ENCODE measurements at regions of chr16 and their contacts with region 1.

Region 1: DNA sequence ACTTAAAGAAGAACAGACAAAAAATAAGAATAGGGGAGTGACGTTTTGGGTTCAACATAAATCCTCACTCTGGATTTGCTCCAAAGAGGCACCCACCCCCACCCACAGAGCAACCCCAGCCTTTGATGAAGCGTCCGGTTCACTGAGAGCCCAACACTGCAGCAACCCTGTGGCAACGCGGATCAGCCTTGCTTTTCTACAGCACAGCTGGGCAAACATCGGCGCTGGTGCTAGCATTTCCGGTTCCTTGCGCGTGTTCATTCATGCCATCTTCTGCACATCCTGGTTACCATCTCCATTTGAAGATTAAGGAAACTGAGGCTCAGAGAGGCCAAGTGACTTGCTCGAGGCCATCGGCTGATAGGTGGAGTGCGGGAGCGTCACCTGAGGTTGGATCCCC is 8.7 kb upstream of the GINS2 start:
- DNase-seq: no peak
- H3K4me3 ChIP-seq: no peak overlapping the region
- H3K27ac ChIP-seq: no peak overlapping the region
- H3K4me1 ChIP-seq: no peaks in the 10 kb centered on the region
- H3K27me3 ChIP-seq: peaks cover 3% of the 10 kb centered on the region
- CTCF ChIP-seq: no peak

Region 2: DNA sequence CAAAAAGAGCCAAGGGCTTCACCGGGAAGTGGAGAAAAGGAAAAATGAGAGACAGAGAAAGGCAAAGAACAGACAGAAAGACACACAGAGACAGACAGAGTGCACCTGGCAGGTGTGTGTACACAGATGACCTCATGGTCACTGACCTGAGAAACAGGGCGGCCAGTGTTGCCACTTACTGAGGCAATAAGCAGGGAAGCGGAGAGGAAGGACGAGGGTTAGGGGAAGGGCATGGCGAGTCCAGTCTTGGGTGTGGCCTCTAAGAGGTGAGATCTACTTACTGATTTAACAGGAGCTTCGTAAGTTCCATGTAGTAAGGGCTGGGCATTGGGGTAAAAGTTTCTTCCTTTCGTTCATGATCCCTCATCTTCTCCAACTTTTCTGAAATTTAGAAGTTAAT is 16.1 kb before region 1 on chr16:
- intact Hi-C with region 1: loop called (anchors 2 kb)
- DNase-seq: no peak
- H3K4me3 ChIP-seq: no peak overlapping the region
- H3K27ac ChIP-seq: no peak overlapping the region
- H3K4me1 ChIP-seq: no peaks in the 10 kb centered on the region
- H3K27me3 ChIP-seq: no peaks in the 10 kb centered on the region
- CTCF ChIP-seq: no peak

Region 3: GRCh38 chr16:85799497-85800337 is 102.3 kb after region 1 on chr16 and contains the starts of genes COX4I1 and EMC8:
- intact Hi-C with region 1: no loop called
- DNase-seq: peak; percentile 66 to 96
- H3K4me3 ChIP-seq: peak within 1 kb of the TSS; percentile 84 to 99
- H3K27ac ChIP-seq: peak within 1 kb of the TSS; percentile 73 to 79
- H3K4me1 ChIP-seq: peaks cover 12 to 20% of the 10 kb centered on the region in 2 donors
- H3K27me3 ChIP-seq: no peaks in the 10 kb centered on the region
- CTCF ChIP-seq: no peak
- total RNA-seq, gene COX4I1: 148 TPM
- total RNA-seq, gene EMC8: 11.9 TPM

Measured in ascending aorta (tissue), 2 donors.